Left lung (tissue), 14 donors: ENCODE measurements at regions of chr11 and their contacts with region 1.

Region 1: GRCh38 chr11:86938900-86939880 is 16.0 kb downstream of the FZD4 start:
- DNase-seq: peak in 1 of 4 donors; percentile 75
- ATAC-seq: peak; percentile 81
- H3K4me3 ChIP-seq: no peak overlapping the region
- H3K27ac ChIP-seq: peak overlapping the region in 1 of 2 donors; percentile 66
- H3K4me1 ChIP-seq: peaks cover 23 to 40% of the 10 kb centered on the region in 2 donors
- H3K27me3 ChIP-seq: no peaks in the 10 kb centered on the region
- CTCF ChIP-seq: peak; percentile 64 to 72

Region 2: DNA sequence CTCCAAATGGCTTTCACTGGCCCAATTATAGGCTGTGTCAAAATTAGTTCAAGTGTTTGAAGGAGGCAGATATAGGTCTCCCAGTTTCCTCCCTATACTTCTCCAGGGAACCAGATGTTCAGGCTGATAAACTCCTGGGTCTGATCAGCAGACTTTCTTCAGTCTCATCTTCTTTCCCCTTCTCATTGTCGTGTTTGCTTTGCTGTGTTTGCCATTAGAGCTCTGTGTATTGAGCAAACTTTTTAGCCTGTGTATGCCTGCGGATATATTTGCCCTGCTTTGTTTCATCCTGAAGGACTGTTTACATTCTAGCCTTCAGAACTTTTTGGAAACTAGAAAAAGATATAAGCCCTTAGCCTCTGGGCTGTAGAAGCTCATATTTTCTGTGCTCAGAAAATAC is 232.9 kb before region 1 on chr11:
- intact Hi-C with region 1: no loop called
- DNase-seq: no peak
- ATAC-seq: peak; percentile 22
- H3K4me3 ChIP-seq: no peak overlapping the region
- H3K27ac ChIP-seq: no peak overlapping the region
- H3K4me1 ChIP-seq: no peaks in the 10 kb centered on the region
- H3K27me3 ChIP-seq: no peaks in the 10 kb centered on the region
- CTCF ChIP-seq: no peak

Region 3: DNA sequence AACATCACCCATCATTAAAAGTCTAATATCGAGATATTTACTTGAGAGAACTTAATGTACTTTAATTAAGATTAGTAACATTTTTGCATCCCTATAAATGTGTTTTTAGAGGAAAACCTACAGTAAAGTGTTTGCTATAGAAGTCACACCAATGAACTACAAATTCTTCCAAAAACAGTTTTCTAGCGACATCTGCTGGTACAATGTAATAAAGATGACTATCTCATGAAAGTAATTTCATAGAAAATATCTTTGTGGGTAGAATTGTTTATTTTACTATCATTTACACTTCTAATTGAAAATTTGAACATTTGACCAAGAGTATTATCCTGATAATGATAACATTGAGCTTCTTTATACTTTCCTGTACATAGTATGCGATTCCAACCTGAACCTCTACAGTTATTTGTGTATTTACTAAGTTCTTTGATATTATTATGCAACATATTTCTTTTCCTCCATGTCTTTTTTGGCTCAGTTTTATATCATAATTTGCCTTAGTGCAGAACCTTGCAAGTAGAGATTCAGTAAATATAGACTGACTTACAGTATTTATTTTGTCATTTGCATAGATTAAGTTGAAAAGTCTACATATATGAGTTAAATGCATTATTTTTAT is 351.2 kb after region 1 on chr11:
- intact Hi-C with region 1: loop called in 1 of 2 experiments (anchors 5 kb)
- DNase-seq: peak in 2 of 4 donors; percentile 58 to 67
- ATAC-seq: peak; percentile 63
- H3K4me3 ChIP-seq: no peak overlapping the region
- H3K27ac ChIP-seq: no peak overlapping the region
- H3K4me1 ChIP-seq: no peaks in the 10 kb centered on the region
- H3K27me3 ChIP-seq: no peaks in the 10 kb centered on the region
- CTCF ChIP-seq: peak; percentile 34 to 49

Region 4: DNA sequence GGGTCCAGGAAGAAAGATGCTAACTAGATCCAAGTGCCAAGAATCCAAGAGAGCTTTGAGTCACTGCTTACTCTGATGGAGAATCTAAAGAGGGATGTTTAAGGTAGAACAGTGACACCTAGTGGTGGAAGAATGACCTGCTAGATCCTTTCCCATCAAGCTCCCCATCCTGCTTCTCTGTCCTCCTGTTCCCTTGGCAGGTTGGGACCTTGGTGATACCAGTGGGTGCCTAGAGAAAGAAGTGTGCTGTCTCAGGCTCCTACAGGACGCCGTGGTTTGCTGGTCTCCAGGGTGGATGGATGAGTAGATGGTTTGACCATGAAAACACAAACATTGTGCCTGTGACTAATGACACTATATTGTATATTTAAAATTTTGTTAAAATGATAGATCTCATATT is 482.2 kb after region 1 on chr11:
- intact Hi-C with region 1: loop called in 1 of 2 experiments (anchors 10 kb)
- DNase-seq: peak in 2 of 4 donors; percentile 59 to 78
- ATAC-seq: peak; percentile 96
- H3K4me3 ChIP-seq: no peak overlapping the region
- H3K27ac ChIP-seq: no peak overlapping the region
- H3K4me1 ChIP-seq: no peaks in the 10 kb centered on the region
- H3K27me3 ChIP-seq: no peaks in the 10 kb centered on the region
- CTCF ChIP-seq: peak; percentile 81